ENCODE measurements at regions of chr1 and their contacts with region 1.

Region 1: GRCh38 chr1:43414634-43415223 is 25.0 kb downstream of the SZT2 start:
- DNase-seq: no peak
- H3K4me3 ChIP-seq: no peak overlapping the region
- H3K27ac ChIP-seq: no peak overlapping the region
- H3K4me1 ChIP-seq: peaks cover 0 to 5% (median 0%) of the 10 kb centered on the region in 6 donors
- H3K27me3 ChIP-seq: no peaks in the 10 kb centered on the region
- CTCF ChIP-seq: peak; percentile 60 to 89 (median 82)
- POLR2A ChIP-seq: no peak

Region 2: GRCh38 chr1:43227143-43227764 is 187.5 kb before region 1 on chr1:
- intact Hi-C with region 1: loop called (anchors 2 kb)
- DNase-seq: peak; percentile 93
- H3K4me3 ChIP-seq: no peak overlapping the region
- H3K27ac ChIP-seq: no peak overlapping the region
- H3K4me1 ChIP-seq: peaks cover 0 to 7% (median 4%) of the 10 kb centered on the region in 6 donors
- H3K27me3 ChIP-seq: no peaks in the 10 kb centered on the region
- CTCF ChIP-seq: peak; percentile 90 to 99 (median 96)
- POLR2A ChIP-seq: no peak

Measured in spleen (tissue), 13 donors.